ENCODE measurements at regions of chr9 and their contacts with region 1.

Region 1: DNA sequence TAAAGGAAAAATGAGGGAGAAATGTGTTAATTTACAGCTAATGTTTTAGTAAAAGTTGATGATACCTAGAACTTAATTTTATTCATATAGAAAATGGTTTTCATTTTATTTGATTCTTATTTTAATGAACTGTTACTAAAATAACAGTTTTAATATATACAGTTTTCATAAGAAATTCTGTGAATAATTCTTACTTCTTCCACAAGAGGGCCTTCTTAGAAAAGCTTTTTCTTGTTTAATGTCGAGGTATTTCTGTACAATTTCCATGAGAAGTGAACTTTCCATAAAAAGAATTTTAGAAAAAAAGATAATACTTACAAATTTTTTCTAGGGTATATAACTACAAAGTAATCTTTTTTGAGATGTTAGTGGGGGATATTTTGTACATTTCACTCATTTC is 73.9 kb downstream of the KLF9 start:
- DNase-seq: no peak
- ATAC-seq: no peak
- H3K4me3 ChIP-seq: no peak overlapping the region
- H3K27ac ChIP-seq: no peak overlapping the region
- H3K4me1 ChIP-seq: no peaks in the 10 kb centered on the region
- H3K27me3 ChIP-seq: no peaks in the 10 kb centered on the region
- CTCF ChIP-seq: peak; percentile 39 to 64 (median 58)
- POLR2A ChIP-seq: no peak

Region 2: DNA sequence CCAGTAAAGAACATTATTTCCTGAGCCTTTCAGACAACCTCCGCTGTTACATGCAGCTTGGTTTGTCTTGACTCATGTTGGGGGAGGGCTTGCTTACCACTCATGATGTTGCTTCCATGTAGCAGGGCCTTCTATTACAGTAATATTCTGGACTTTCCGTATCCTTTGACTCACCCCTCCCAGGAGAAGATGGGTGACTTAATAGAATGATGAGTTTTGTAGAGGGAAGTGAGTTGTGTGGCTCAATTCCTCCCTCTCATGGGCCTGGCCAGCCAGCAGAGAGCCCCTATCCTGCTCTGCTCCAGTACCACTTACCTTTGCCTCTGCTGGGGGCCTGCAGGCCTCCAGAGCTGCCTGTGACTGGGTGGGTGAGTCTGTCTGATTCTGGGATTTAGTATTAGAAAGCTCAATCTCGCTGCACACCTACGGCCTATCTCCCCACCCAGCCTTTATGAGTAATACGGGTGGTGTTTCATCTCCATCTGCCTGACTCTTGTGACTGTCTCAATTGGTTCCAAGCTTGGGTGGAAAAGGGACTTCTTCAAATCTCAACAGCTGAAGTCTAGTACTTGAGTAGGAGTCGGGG is 126.5 kb after region 1 on chr9:
- in situ Hi-C with region 1: no loop called
- intact Hi-C with region 1: no loop called
- DNase-seq: peak in 1 of 2 donors; percentile 37
- ATAC-seq: peak; percentile 21 to 37
- H3K4me3 ChIP-seq: no peak overlapping the region
- H3K27ac ChIP-seq: peak overlapping the region; percentile 10 to 53 (median 42)
- H3K4me1 ChIP-seq: peaks cover 31 to 40% of the 10 kb centered on the region in 2 donors
- H3K27me3 ChIP-seq: no peaks in the 10 kb centered on the region
- CTCF ChIP-seq: no peak
- POLR2A ChIP-seq: peak in 1 of 2 donors; percentile 9

Region 3: DNA sequence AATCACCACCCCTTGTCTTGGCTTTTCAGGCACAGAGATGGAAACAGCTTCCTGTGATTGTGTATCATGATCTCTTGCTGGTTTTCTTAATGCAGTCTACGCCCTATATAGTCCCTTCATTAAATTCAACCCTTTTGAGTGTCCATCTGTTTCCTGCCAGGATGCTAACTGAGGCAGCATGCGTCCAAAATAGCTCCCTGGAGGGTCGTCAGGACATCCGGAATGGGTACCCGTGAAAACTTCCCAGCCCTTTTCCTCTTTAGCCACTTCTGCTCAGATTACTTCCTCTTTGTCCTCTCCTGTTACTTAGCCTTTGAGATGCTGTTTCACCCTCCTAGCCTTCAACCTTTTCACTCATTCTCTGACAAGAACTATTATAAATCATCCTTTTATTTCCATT is 153.6 kb after region 1 on chr9:
- in situ Hi-C with region 1: loop called in 2 of 4 experiments (anchors 5 to 10 kb)
- intact Hi-C with region 1: no loop called
- DNase-seq: no peak
- ATAC-seq: no peak
- H3K4me3 ChIP-seq: no peak overlapping the region
- H3K27ac ChIP-seq: peak overlapping the region in 3 of 4 donors; percentile 25 to 48 (median 30)
- H3K4me1 ChIP-seq: peaks cover 16 to 45% of the 10 kb centered on the region in 2 donors
- H3K27me3 ChIP-seq: no peaks in the 10 kb centered on the region
- CTCF ChIP-seq: no peak
- POLR2A ChIP-seq: no peak

Measured in gastrocnemius medialis (tissue), 4 donors.